WTC11 (cell line): ENCODE measurements at regions of chr3 and their contacts with region 1.

Region 1: GRCh38 chr3:71875461-71875947 is 90.6 kb upstream of the PROK2 start:
- DNase-seq: peak; percentile 93
- ATAC-seq: peak; percentile 86
- H3K4me3 Mint-ChIP-seq: no peak overlapping the region
- H3K27ac Mint-ChIP-seq: peak overlapping the region; percentile 96
- H3K4me1 Mint-ChIP-seq: peaks cover 66% of the 10 kb centered on the region
- H3K27me3 Mint-ChIP-seq: no peaks in the 10 kb centered on the region; the same call in 1 of the 2 replicates
- CTCF ChIP-seq: peak; percentile 72

Region 2: GRCh38 chr3:71725279-71725991 is 150.1 kb before region 1 on chr3 and contains the start of gene EIF4E3:
- CTCF ChIA-PET with region 1: interaction called, 35 read pairs
- POLR2A ChIA-PET with region 1: no interaction called
- DNase-seq: peak; percentile 52
- ATAC-seq: peak; percentile 34
- H3K4me3 Mint-ChIP-seq: peak within 1 kb of the TSS; percentile 78
- H3K27ac Mint-ChIP-seq: no peak within 1 kb of the TSS
- H3K4me1 Mint-ChIP-seq: peaks cover 40% of the 10 kb centered on the region
- H3K27me3 Mint-ChIP-seq: peaks cover 35% of the 10 kb centered on the region
- CTCF ChIP-seq: no peak
- total RNA-seq, gene EIF4E3: 14.0 to 16.5 TPM (median 14.3 TPM) in 3 replicates

Region 3: DNA sequence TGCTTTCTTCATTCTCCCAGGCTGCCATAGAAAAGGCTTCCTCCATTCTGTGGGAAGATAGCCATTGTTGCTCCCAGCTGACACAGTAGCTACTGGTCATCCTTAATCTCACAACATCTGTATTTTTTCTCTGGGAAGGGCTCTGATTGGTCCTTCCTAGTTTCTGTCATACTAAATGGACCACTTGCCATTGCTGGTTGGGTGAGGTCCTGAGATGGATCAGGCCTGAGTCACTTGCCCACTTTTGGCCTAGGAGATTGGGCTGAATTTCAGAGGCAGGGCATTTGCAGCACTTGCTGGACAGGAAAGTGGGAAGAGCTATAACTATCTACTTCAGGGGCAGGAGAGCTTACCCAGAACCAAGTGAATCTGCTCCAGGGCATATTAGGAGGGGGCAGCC is 16.0 kb after region 1 on chr3:
- CTCF ChIA-PET with region 1: interaction called, 22 read pairs
- POLR2A ChIA-PET with region 1: no interaction called
- DNase-seq: no peak
- ATAC-seq: no peak
- H3K4me3 Mint-ChIP-seq: no peak overlapping the region
- H3K27ac Mint-ChIP-seq: no peak overlapping the region
- H3K4me1 Mint-ChIP-seq: peaks cover 22% of the 10 kb centered on the region
- H3K27me3 Mint-ChIP-seq: no peaks in the 10 kb centered on the region
- CTCF ChIP-seq: no peak

Region 4: DNA sequence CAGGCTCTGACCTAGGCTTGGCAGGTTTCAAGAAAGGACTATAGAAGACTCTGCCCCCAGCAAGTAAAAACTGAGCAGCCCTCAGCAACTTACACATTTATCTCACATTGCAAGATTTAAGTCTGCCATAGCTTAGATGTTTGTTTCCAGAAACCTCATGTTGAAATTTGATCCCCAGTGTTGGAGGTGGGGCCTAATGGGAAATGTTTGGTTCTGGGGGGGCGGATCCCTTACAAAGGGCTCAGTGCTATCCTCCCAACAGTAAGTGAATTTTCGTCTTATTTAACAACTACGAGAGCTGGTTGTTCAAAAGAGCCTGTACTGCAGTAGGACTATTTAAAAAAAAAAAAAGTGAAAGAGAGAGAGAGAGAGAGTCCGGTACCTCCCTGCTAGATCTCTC is 34.6 kb after region 1 on chr3:
- CTCF ChIA-PET with region 1: interaction called, 15 read pairs
- POLR2A ChIA-PET with region 1: no interaction called
- DNase-seq: no peak
- ATAC-seq: peak; percentile 63
- H3K4me3 Mint-ChIP-seq: no peak overlapping the region
- H3K27ac Mint-ChIP-seq: no peak overlapping the region
- H3K4me1 Mint-ChIP-seq: peaks cover 24% of the 10 kb centered on the region
- H3K27me3 Mint-ChIP-seq: peaks cover 3% of the 10 kb centered on the region
- CTCF ChIP-seq: no peak

Region 5: DNA sequence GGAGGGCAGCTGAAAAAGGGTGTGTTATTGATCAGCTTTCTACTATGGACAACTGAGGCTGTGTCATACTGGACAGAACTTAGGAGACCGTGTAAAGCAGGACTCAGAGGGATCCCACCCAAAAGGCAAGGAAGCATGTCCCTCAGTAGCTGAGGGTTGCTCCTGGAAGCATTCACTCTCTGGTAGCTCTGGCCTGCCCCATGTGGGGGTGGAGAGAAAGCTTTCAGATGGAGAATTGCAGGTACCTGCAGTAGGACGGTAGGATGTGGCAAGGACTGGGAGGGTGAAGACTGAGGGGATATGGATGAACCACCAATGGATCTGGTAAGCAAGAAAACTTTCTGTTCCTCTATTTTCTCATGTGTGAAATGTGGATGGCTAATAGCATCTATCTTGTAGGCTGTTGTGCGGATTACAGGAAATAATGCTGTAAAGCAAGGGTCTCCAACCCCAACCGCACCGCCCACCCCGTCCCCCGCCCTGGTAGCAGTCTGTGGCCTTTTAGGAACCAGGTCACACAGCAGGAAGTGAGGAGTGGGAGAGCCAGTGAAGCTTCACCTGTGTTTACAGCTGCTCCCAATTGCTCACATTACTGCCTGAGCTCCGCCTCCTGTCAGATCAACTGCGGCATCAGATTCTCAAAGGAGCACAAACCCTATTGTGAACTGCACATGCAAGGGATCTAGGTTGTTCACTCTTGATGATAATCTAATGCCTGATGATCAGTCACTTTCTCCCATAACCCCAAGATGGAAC is 67.1 kb after region 1 on chr3:
- CTCF ChIA-PET with region 1: interaction called, 23 read pairs
- POLR2A ChIA-PET with region 1: no interaction called
- DNase-seq: peak; percentile 29
- ATAC-seq: peak; percentile 94
- H3K4me3 Mint-ChIP-seq: no peak overlapping the region
- H3K27ac Mint-ChIP-seq: no peak overlapping the region
- H3K4me1 Mint-ChIP-seq: peaks cover 10% of the 10 kb centered on the region
- H3K27me3 Mint-ChIP-seq: peaks cover 26% of the 10 kb centered on the region
- CTCF ChIP-seq: no peak

Region 6: DNA sequence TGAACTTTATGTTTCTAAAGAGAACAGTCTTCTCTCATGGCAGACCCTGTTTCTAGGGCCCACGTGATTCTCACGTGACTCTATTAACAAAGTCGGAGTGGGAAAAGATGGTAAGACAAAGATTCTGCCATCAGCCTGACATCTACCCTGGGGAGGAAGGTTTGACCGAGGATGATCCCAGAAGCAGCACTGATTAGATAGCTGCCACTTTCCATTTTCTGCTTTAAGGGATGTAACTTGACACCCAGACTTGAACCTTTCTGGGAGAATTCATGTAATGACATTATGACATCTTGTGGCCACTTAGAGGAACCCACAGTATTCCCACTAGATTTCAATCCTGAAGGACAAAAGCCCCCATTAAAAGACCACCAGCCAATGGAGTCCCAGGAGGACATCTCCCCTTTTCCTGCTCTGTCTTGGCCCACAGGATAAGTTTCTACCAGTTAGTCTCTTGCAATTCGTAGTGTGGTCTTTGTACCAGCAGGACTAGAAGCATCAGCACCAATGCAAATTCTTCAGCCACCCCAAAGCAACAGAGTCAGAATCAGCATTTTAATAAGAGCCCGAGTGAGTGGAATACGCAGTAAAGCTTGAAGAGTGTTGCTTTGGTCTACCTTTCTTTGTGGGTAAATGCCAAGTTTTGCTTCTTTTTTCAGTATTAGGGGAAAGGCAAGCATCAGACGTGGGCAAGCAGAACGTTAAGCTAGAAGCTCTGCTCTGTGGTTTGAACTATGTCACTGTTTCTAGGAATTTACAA is 389.9 kb after region 1 on chr3:
- CTCF ChIA-PET with region 1: interaction called, 12 read pairs
- POLR2A ChIA-PET with region 1: no interaction called
- DNase-seq: no peak
- ATAC-seq: peak; percentile 68
- H3K4me3 Mint-ChIP-seq: no peak overlapping the region
- H3K27ac Mint-ChIP-seq: no peak overlapping the region
- H3K4me1 Mint-ChIP-seq: peaks cover 19% of the 10 kb centered on the region
- H3K27me3 Mint-ChIP-seq: no peaks in the 10 kb centered on the region
- CTCF ChIP-seq: no peak